PC-3 (cell line): ENCODE measurements at regions of chr21 and their contacts with region 1.

Region 1: GRCh38 chr21:45973659-45974072 is 7.9 kb upstream of the COL6A1 start:
- DNase-seq: peak; percentile 86
- ATAC-seq: peak; percentile 25
- H3K4me3 ChIP-seq: peak overlapping the region; percentile 64
- H3K27ac ChIP-seq: peak overlapping the region; percentile 93
- H3K4me1 ChIP-seq: peaks cover 34% of the 10 kb centered on the region
- H3K27me3 ChIP-seq: no peaks in the 10 kb centered on the region
- CTCF ChIP-seq: peak; percentile 88

Region 2: GRCh38 chr21:46130831-46131587 is 157.3 kb after region 1 on chr21:
- CTCF ChIA-PET with region 1: no interaction called
- POLR2A ChIA-PET with region 1: interaction called, 13 read pairs
- intact Hi-C with region 1: no loop called
- DNase-seq: no peak
- ATAC-seq: peak; percentile 2
- H3K4me3 ChIP-seq: no peak overlapping the region
- H3K27ac ChIP-seq: no peak overlapping the region
- H3K4me1 ChIP-seq: no peaks in the 10 kb centered on the region
- H3K27me3 ChIP-seq: no peaks in the 10 kb centered on the region
- CTCF ChIP-seq: no peak